ENCODE measurements at regions of chr7 and their contacts with region 1.

Region 1: GRCh38 chr7:100469227-100470044 is 5.4 kb upstream of the SPACDR start:
- DNase-seq: peak; percentile 94

Region 2: DNA sequence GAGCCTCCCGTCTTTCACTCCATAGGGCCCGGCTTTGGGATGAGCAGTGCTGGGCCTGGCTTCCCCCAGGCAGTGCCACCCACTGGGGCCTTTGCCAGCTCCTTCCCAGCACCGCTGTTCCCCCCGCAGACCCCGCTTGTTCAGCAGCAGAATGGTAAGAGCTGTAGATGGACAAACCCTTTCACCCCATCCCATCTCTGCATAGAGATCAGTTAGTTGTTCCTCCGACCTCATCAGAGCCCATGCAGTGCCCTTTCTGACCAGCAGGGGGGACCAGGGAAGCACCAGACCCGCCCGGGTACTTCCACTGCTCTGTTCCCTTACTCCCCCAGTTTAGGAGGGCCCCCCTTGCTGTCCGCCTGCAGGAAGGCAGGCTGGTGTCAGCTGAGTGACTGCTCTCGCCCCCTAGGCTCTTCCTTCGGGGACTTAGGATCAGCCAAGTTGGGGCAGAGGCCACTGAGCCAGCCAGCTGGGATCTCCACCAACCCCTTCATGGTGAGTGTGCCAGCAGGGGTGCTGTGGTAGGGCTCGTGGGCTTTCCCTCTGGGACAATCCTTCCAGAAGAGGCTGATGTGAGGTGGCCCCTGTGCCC is 94.5 kb after region 1 on chr7:
- intact Hi-C with region 1: loop called (anchors 1 kb)
- DNase-seq: peak; percentile 91

Region 3: GRCh38 chr7:100719523-100720319 is 250.3 kb after region 1 on chr7:
- intact Hi-C with region 1: loop called (anchors 5 kb)
- DNase-seq: no peak

Measured in cardiac septum (tissue), 1 donor.